ENCODE measurements at regions of chr9 and their contacts with region 1.

Region 1: DNA sequence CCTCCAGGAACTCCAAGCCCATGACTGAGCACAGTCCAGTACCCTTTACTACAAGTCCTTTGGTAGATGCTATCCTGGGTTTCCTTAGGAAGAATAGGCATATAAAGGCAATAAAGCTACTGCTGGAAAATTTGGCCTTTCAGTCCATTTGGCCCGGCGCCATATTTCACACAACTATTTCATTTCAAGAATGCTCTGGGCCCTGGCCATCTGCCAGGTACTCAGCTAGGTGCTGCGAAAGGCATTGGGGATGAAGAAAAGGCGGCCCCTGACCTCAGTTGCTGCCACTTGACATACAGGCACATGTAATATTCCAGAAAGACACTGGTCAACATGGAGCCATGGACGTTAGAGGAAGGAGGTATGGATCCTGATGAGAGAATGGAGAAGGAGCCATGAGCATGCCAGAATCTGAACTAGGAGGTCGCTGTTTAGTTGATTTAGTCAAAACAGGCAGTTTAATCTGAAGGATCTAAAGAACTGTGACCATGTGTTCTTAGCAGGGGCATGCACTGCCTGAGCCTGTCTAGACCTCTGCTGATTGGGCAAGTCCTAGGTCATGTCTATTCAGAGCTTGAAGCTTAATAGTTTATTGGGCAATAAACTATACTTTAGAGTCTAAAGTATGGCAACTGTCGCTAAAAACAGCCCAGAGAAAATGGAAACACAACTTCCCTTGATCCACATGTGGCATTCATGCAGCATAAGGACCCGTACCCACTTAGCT is 149.3 kb downstream of the MELK start:
- DNase-seq: no peak
- ATAC-seq: no peak
- H3K4me3 ChIP-seq: no peak overlapping the region
- H3K27ac ChIP-seq: no peak overlapping the region
- H3K4me1 ChIP-seq: no peaks in the 10 kb centered on the region
- H3K27me3 ChIP-seq: no peaks in the 10 kb centered on the region
- CTCF ChIP-seq: no peak
- POLR2A ChIP-seq: no peak

Region 2: DNA sequence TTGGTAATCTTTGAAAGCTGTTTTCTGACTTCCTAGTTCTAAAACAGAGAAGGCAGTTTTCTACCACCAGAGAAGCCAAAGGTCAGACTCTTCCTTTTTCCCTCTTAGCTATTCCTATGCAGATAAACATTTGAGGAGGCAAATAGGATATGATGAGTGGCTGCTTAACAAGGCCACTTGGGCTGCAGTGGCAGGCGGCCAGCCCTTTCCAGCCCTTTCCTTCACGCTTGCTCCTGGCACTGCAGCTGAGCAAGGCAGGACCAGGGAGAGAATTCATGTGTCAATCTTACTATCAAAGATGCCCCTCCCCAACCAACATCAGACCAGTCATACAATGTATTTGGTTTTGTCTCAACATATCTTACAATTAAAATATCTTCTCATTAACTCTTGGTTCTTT is 285.1 kb before region 1 on chr9:
- in situ Hi-C with region 1: loop called in 1 of 4 experiments (anchors 25 kb)
- intact Hi-C with region 1: no loop called
- DNase-seq: no peak
- ATAC-seq: no peak
- H3K4me3 ChIP-seq: no peak overlapping the region
- H3K27ac ChIP-seq: no peak overlapping the region
- H3K4me1 ChIP-seq: no peaks in the 10 kb centered on the region
- H3K27me3 ChIP-seq: no peaks in the 10 kb centered on the region
- CTCF ChIP-seq: no peak
- POLR2A ChIP-seq: no peak

Region 3: GRCh38 chr9:36517131-36517530 is 204.9 kb before region 1 on chr9:
- in situ Hi-C with region 1: no loop called
- intact Hi-C with region 1: no loop called
- DNase-seq: no peak
- ATAC-seq: no peak
- H3K4me3 ChIP-seq: no peak overlapping the region
- H3K27ac ChIP-seq: no peak overlapping the region
- H3K4me1 ChIP-seq: no peaks in the 10 kb centered on the region
- H3K27me3 ChIP-seq: no peaks in the 10 kb centered on the region
- CTCF ChIP-seq: no peak
- POLR2A ChIP-seq: no peak

Region 4: DNA sequence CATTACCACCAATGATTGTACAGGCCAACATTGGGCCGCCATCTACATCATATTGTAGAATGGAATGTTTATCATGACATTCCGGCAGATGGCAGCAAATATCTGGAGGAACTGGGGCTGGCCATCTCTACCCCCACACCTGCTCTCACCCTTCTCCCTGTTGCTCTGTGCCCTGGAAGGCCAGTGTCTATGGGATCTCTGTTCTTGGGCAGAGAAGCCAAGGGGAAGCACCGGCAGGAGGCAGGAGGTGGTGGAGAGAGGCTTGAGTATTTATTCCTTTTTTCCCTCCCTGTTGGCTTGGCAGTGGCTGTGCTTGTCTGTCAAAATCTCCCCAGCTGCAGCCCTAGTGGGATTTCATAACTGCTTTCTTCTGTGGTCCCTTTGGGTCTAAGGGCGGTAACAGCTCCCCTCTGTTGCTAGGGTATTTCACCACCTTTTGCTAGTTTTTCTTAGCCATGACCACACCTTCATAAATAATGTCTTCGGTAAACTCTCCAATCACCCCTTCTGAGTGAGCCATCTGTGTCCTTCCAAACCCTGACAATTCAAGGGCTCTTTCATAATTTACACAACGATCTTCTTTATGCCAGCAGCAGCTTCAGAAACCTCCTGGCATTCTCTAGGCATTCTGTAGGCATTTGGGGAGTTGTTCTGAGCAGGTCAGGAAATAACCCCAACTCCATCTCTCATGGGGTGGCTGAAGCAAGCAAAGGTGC is 76.5 kb after region 1 on chr9:
- in situ Hi-C with region 1: loop called in 1 of 4 experiments (anchors 25 kb)
- intact Hi-C with region 1: no loop called
- DNase-seq: no peak
- ATAC-seq: no peak
- H3K4me3 ChIP-seq: no peak overlapping the region
- H3K27ac ChIP-seq: no peak overlapping the region
- H3K4me1 ChIP-seq: no peaks in the 10 kb centered on the region
- H3K27me3 ChIP-seq: peaks cover 0 to under 1% (median 0%) of the 10 kb centered on the region in 3 donors
- CTCF ChIP-seq: no peak
- POLR2A ChIP-seq: no peak